CD8-positive, alpha-beta T cell (primary cell): ENCODE measurements at regions of chr6 and their contacts with region 1.

Region 1: DNA sequence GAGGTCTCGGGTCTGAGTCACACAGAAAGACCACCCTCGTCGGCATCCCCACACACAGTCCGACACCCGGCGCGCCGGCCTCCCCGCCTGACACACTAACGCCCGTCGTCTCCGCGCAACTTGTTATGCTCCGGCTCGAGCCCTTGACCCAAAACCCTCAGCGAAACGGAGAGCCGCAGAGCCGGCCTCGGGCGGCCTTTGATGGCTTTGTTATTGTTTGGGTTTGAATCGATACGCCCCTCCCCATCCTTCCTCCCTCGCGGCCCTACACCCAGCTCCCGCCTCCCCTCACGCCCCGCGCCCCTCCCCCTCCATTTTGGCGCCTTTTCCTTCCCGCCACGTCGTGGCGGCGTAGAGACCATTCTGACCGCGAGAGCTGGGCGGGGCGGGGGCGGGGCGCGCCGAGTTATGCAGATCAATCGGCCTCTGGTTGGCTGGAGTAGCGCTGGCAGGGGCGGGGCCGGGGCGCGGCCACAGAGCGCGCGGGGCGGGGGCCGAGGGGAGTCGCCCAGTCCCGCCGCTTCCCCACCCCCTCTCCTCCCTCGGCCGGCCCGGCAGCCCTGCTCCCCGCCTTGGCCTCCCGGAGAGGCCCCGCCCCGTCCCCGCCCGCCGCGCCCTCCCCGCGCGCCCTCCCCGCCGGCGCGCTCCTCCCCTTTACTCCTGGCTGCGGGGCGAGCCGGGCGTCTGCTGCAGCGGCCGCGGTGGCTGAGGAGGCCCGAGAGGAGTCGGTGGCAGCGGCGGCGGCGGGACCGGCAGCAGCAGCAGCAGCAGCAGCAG is at the start of gene PIM1:
- DNase-seq: peak; percentile 98 to 100 (median 99)
- ATAC-seq: peak; percentile 83
- H3K4me3 ChIP-seq: peak within 1 kb of the TSS; percentile 87 to 97
- H3K4me3 Mint-ChIP-seq: peak within 1 kb of the TSS; percentile 92
- H3K27ac ChIP-seq: peak within 1 kb of the TSS; percentile 74 to 78
- H3K27ac Mint-ChIP-seq: peak within 1 kb of the TSS; percentile 88
- H3K4me1 ChIP-seq: peaks cover 23% of the 10 kb centered on the region
- H3K4me1 Mint-ChIP-seq: peaks cover 41% of the 10 kb centered on the region
- H3K27me3 ChIP-seq: no peaks in the 10 kb centered on the region
- H3K27me3 Mint-ChIP-seq: no peaks in the 10 kb centered on the region
- CTCF ChIP-seq: no peak
- total RNA-seq, gene PIM1: 125 TPM

Region 2: GRCh38 chr6:36765594-36766398 is 403.9 kb before region 1 on chr6:
- CTCF ChIA-PET with region 1: interaction called, 10 read pairs
- POLR2A ChIA-PET with region 1: no interaction called
- intact Hi-C with region 1: no loop called
- DNase-seq: peak; percentile 65 to 87 (median 80)
- ATAC-seq: peak; percentile 95
- H3K4me3 ChIP-seq: no peak overlapping the region
- H3K4me3 Mint-ChIP-seq: no peak overlapping the region
- H3K27ac ChIP-seq: no peak overlapping the region
- H3K27ac Mint-ChIP-seq: no peak overlapping the region
- H3K4me1 ChIP-seq: peaks cover 42% of the 10 kb centered on the region
- H3K4me1 Mint-ChIP-seq: peaks cover 33% of the 10 kb centered on the region
- H3K27me3 ChIP-seq: no peaks in the 10 kb centered on the region
- H3K27me3 Mint-ChIP-seq: no peaks in the 10 kb centered on the region
- CTCF ChIP-seq: peak; percentile 75

Region 3: GRCh38 chr6:37018198-37019064 is 151.3 kb before region 1 on chr6:
- CTCF ChIA-PET with region 1: interaction called, 396 read pairs
- POLR2A ChIA-PET with region 1: interaction called, 74 read pairs
- intact Hi-C with region 1: loop called (anchors 1 kb)
- DNase-seq: peak; percentile 78 to 90 (median 88)
- ATAC-seq: peak; percentile 94
- H3K4me3 ChIP-seq: no peak overlapping the region
- H3K4me3 Mint-ChIP-seq: no peak overlapping the region
- H3K27ac ChIP-seq: peak overlapping the region in 1 of 2 experiments; percentile 24
- H3K27ac Mint-ChIP-seq: peak overlapping the region; percentile 64
- H3K4me1 ChIP-seq: peaks cover 35% of the 10 kb centered on the region
- H3K4me1 Mint-ChIP-seq: peaks cover 41% of the 10 kb centered on the region
- H3K27me3 ChIP-seq: no peaks in the 10 kb centered on the region
- H3K27me3 Mint-ChIP-seq: no peaks in the 10 kb centered on the region
- CTCF ChIP-seq: peak; percentile 96

Region 4: GRCh38 chr6:37051138-37052026 is 118.3 kb before region 1 on chr6:
- CTCF ChIA-PET with region 1: interaction called, 226 read pairs
- POLR2A ChIA-PET with region 1: interaction called, 69 read pairs
- intact Hi-C with region 1: loop called (anchors 1 kb)
- DNase-seq: peak; percentile 83 to 94 (median 91)
- ATAC-seq: peak; percentile 71
- H3K4me3 ChIP-seq: peak overlapping the region in 1 of 2 experiments; percentile 44
- H3K4me3 Mint-ChIP-seq: peak overlapping the region; percentile 58
- H3K27ac ChIP-seq: peak overlapping the region; percentile 59 to 94
- H3K27ac Mint-ChIP-seq: peak overlapping the region; percentile 96
- H3K4me1 ChIP-seq: peaks cover 59% of the 10 kb centered on the region
- H3K4me1 Mint-ChIP-seq: peaks cover 58% of the 10 kb centered on the region
- H3K27me3 ChIP-seq: no peaks in the 10 kb centered on the region
- H3K27me3 Mint-ChIP-seq: no peaks in the 10 kb centered on the region
- CTCF ChIP-seq: peak; percentile 83

Region 5: GRCh38 chr6:37190159-37190535 is 20.5 kb after region 1 on chr6:
- CTCF ChIA-PET with region 1: interaction called, 28 read pairs
- POLR2A ChIA-PET with region 1: interaction called, 17 read pairs
- intact Hi-C with region 1: loop called in 1 of 2 experiments (anchors 2 kb)
- DNase-seq: no peak
- ATAC-seq: no peak
- H3K4me3 ChIP-seq: no peak overlapping the region
- H3K4me3 Mint-ChIP-seq: no peak overlapping the region
- H3K27ac ChIP-seq: no peak overlapping the region
- H3K27ac Mint-ChIP-seq: peak overlapping the region; percentile 32
- H3K4me1 ChIP-seq: peaks cover 59% of the 10 kb centered on the region
- H3K4me1 Mint-ChIP-seq: peaks cover 61% of the 10 kb centered on the region
- H3K27me3 ChIP-seq: no peaks in the 10 kb centered on the region
- H3K27me3 Mint-ChIP-seq: no peaks in the 10 kb centered on the region
- CTCF ChIP-seq: no peak

Region 6: DNA sequence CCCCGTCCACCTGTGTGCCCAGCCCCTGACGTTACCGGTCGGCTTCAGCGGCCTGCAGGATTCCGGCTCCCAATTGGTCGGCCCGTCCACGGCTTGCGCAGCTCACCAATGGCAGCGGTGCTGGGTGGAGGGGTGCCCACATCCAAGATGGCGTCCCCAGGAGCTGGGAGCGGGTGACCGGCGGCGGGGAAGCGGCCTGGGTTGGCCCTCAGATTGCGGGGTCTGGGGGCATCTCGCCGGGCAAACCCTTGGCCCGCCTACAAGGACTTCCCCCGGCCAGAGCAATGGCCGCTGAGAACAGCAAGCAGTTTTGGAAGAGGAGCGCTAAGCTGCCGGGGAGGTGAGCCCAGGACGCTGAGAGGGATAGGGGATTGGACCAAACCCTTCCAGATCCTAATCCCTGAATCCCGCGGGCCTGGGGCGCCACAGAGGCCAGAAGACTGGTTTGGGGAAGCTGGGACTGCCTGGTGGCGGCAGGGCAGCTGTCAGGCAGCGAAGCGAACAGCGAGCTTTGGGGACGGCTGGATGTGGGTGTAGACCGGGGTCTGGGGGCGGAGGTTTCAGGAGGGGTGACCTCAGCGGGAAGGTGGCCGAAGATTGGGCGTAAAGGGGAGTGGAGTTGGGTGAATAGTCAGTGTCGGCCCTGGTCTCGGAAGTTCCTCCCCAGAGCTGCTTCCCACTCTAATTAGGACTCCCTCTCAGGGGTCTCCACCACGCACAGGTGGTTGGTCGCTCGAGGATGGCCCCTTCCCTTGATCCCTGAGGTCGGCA is 88.1 kb after region 1 on chr6 and contains the starts of genes TBC1D22B and TMEM217:
- CTCF ChIA-PET with region 1: interaction called, 3 read pairs
- POLR2A ChIA-PET with region 1: interaction called, 3 read pairs
- intact Hi-C with region 1: loop called (anchors 2 kb)
- DNase-seq: peak; percentile 89 to 97 (median 95)
- ATAC-seq: peak; percentile 99
- H3K4me3 ChIP-seq: peak within 1 kb of the TSS; percentile 93 to 100
- H3K4me3 Mint-ChIP-seq: peak within 1 kb of the TSS; percentile 92
- H3K27ac ChIP-seq: peak within 1 kb of the TSS; percentile 74 to 94
- H3K27ac Mint-ChIP-seq: peak within 1 kb of the TSS; percentile 85
- H3K4me1 ChIP-seq: peaks cover 24% of the 10 kb centered on the region
- H3K4me1 Mint-ChIP-seq: peaks cover 40% of the 10 kb centered on the region
- H3K27me3 ChIP-seq: no peaks in the 10 kb centered on the region
- H3K27me3 Mint-ChIP-seq: no peaks in the 10 kb centered on the region
- CTCF ChIP-seq: no peak
- total RNA-seq, gene TBC1D22B: 6.7 to 6.8 TPM
- total RNA-seq, gene TMEM217: 0.27 to 1.2 TPM

Region 7: GRCh38 chr6:37602346-37602745 is 432.7 kb after region 1 on chr6:
- CTCF ChIA-PET with region 1: no interaction called
- POLR2A ChIA-PET with region 1: no interaction called
- intact Hi-C with region 1: no loop called
- DNase-seq: no peak
- ATAC-seq: no peak
- H3K4me3 ChIP-seq: no peak overlapping the region
- H3K4me3 Mint-ChIP-seq: no peak overlapping the region
- H3K27ac ChIP-seq: no peak overlapping the region
- H3K27ac Mint-ChIP-seq: no peak overlapping the region
- H3K4me1 ChIP-seq: no peaks in the 10 kb centered on the region
- H3K4me1 Mint-ChIP-seq: no peaks in the 10 kb centered on the region
- H3K27me3 ChIP-seq: no peaks in the 10 kb centered on the region
- H3K27me3 Mint-ChIP-seq: peaks cover 3% of the 10 kb centered on the region
- CTCF ChIP-seq: no peak

Region 8: DNA sequence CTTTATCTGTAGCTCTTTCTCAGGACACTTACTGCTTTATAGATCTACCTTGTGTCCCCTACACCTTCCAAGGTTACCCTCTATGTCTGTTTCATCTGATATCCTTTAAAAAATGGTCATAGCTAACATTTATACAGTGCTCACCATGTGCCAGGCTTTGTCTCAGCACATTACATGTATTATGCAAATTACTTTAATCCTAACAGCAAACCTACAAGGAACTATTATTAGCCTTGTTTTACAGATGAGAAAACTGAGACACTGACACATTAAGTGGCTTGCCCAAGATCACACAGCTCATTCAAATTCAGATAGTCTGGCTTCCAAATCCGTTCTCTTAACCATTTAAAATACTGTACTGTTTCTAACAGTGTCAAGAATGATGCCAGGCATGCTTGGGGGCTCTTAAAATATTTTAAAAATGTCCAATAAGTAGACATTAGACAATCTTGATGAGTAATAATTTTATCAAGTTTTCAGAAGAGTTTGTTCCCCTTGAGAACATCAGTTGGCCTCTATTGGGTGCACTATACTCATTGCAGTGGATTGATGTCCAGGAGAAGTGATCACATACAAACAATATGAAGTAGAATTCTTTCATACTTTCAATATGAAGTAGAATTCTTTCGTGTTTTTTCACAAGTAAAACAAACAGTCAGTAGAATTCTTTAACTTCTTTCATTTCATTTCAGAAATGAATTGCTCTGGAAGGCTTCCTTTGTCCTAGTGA is 1615.0 kb after region 1 on chr6:
- CTCF ChIA-PET with region 1: no interaction called
- POLR2A ChIA-PET with region 1: no interaction called
- intact Hi-C with region 1: no loop called
- DNase-seq: no peak
- ATAC-seq: no peak
- H3K4me3 ChIP-seq: no peak overlapping the region
- H3K4me3 Mint-ChIP-seq: no peak overlapping the region
- H3K27ac ChIP-seq: no peak overlapping the region
- H3K27ac Mint-ChIP-seq: no peak overlapping the region
- H3K4me1 ChIP-seq: no peaks in the 10 kb centered on the region
- H3K4me1 Mint-ChIP-seq: no peaks in the 10 kb centered on the region
- H3K27me3 ChIP-seq: no peaks in the 10 kb centered on the region
- H3K27me3 Mint-ChIP-seq: peaks cover 27% of the 10 kb centered on the region
- CTCF ChIP-seq: no peak